GM18951 (cell line): ENCODE measurements at regions of chr22 and their contacts with region 1.

Region 1: GRCh38 chr22:23128269-23129108 is 13.3 kb downstream of the RSPH14 start:
- POLR2A ChIP-seq: no peak

Region 2: DNA sequence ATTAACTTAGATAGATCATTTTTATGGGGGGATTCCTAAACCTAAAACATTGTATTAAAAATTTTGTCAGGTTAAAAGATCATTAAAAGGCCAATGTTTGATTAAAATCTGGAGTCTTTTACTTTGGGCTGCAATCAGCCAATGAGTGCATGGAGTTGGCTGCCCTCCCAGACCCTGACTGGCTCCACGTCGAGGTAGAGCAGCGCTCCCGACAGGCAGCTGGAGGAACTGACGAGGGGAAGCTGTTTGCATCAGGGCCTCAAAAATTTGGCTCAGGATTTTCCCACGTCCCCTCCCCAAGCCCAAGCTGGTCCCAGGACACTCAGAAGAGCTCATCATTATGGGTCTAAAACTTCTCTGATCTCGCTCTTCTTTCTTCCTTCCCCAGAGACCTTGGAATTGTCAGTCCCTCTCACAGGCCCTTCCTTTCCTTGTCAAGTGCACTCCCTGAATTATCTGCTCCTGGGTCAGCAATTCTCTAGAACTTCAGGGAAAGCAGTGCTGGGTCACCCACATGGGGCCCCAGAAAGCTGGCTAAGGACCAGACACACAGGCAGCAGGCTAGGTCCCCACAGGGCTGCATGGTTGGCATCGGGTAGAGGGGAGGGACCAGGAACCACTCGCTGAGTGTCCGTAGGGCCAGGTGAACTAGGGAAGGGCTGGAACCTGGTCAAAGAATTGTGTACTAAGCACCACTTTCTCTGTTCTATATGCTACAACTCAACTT is 360.4 kb before region 1 on chr22:
- in situ Hi-C with region 1: loop called (anchors 10 kb)
- POLR2A ChIP-seq: no peak

Region 3: GRCh38 chr22:22836635-22837034 is 291.9 kb before region 1 on chr22:
- in situ Hi-C with region 1: no loop called
- POLR2A ChIP-seq: no peak

Region 4: DNA sequence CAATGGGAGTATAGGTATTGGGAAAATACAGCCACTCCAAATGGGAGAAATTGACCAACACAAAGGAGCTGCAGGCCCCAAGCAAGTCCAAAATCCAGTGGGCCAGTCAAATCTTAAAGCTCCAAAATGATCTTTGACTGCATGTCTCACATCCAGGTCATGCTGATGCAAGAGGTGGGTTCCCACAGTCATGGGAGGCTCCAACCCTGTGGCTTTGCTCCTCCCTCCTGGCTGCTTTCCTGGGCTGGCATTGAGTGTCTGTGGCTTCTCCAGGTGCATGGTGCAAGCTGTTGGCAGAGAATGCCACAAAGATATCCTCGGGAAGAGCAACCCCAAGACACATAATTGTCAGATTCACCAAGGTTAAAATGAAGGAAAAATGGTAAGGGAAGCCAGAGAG is 160.1 kb before region 1 on chr22:
- in situ Hi-C with region 1: loop called (anchors 5 kb)
- POLR2A ChIP-seq: no peak

Region 5: DNA sequence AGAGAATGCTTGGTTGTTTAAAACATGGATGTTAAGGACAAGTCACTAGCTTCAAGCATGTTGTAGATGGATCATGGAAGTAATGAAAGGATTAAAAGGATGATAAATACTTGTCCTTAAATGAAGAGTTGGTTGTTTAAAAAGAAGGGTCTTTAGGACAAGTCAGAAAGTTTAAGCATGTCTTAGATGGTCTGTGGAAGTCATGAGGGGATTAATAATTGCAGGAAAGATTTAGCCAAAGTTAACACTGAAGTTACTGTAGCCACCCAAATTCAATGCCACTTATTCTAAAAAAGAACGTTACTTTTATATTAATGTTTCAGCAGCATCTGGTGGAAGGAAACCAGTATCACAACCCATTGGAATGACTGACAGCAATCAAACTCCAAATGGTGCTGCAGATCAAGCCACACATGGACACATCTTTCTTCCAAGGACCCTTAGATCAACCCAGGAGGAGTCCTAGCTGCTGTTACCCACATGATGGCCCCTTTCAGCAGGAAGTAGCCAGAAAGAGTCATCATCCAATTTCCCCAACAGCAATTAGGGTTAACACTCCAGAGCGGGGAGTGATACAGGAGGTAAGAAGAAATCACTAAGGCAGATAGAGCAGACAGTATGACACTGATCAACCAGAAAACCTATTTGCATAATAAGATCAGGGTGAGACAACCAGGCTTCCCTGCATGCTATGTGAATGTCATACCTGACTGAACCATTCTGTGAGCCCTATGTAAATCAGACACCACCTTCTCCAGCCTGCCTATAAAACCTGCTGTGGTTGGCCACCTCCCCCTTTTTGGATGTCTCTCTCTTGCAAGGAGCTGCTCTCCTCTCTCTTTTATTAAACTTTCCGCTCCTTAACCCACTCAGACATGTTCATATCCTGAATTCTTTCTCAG is 146.6 kb before region 1 on chr22:
- in situ Hi-C with region 1: no loop called
- POLR2A ChIP-seq: no peak